ENCODE measurements at regions of chr12 and their contacts with region 1.

Region 1: GRCh38 chr12:107607464-107608392 is 77.9 kb upstream of the PWP1 start:
- DNase-seq: peak; percentile 83 to 86
- ATAC-seq: peak; percentile 78 to 95
- H3K4me3 ChIP-seq: no peak overlapping the region
- H3K27ac ChIP-seq: peak overlapping the region; percentile 6 to 18; a peak in 1 of 6 replicates
- H3K4me1 ChIP-seq: no peaks in the 10 kb centered on the region
- CTCF ChIP-seq: peak; percentile 90
- EP300 ChIP-seq: no peak
- POLR2A ChIP-seq: no peak
- RAD21 ChIP-seq: peak; percentile 95 to 96

Region 2: GRCh38 chr12:107138990-107139389 is 468.7 kb before region 1 on chr12:
- CTCF ChIA-PET with region 1: interaction called, 419 read pairs
- POLR2A ChIA-PET with region 1: no interaction called
- DNase-seq: no peak
- ATAC-seq: no peak
- H3K4me3 ChIP-seq: no peak overlapping the region
- H3K27ac ChIP-seq: no peak overlapping the region
- H3K4me1 ChIP-seq: no peaks in the 10 kb centered on the region
- CTCF ChIP-seq: no peak
- EP300 ChIP-seq: no peak
- POLR2A ChIP-seq: no peak
- RAD21 ChIP-seq: no peak

Region 3: DNA sequence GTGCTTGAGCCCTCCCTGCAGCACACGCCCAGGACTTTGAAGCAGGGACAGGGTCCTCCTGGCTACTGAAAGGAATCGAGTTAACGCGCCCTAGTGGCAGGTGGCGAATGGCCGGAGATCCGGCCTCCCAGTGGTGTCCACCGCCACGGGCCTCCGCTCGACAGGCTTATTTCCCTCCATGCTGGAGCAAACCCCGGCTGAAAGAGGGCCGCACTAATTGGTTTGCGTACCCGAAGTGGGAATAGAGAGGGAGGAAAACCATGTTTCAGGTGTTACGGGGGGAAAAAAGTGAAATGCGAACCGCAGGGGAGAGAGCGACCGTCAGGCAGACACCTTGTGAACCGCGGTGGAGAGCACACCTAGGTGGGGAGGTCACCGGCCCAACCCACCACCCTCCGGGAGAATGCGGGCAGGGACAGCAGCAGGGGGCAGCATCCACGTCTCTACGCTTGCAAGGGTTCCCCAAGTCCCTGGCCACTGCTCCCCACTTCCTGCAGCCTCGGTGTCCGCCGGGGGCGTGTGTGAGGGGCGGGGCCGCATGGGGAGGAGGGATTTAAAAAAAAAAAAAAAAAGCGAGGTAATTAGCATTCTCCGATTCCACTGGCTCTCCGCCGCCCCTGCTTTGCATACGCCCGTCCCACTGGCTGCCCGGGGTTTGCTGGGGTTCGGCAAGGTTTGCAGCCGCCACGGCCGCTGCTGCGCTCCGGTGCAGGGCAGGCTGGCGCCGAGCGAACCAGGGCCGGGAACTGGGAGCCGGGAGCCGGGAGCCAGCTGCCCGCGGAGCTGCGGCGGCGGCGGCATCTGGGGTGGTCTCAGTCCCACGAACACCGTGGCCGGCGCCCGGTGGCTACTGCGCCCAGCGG is 289.7 kb before region 1 on chr12:
- CTCF ChIA-PET with region 1: interaction called, 50 read pairs
- POLR2A ChIA-PET with region 1: no interaction called
- DNase-seq: peak; percentile 91 to 95
- ATAC-seq: peak; percentile 75 to 90
- H3K4me3 ChIP-seq: peak overlapping the region; percentile 88
- H3K27ac ChIP-seq: peak overlapping the region; percentile 85 to 94
- H3K4me1 ChIP-seq: peaks cover 19% of the 10 kb centered on the region; the same call in 2 of the 3 replicates
- CTCF ChIP-seq: peak; percentile 60
- EP300 ChIP-seq: no peak
- POLR2A ChIP-seq: peak; percentile 86
- RAD21 ChIP-seq: peak; percentile 62 to 68

Region 4: DNA sequence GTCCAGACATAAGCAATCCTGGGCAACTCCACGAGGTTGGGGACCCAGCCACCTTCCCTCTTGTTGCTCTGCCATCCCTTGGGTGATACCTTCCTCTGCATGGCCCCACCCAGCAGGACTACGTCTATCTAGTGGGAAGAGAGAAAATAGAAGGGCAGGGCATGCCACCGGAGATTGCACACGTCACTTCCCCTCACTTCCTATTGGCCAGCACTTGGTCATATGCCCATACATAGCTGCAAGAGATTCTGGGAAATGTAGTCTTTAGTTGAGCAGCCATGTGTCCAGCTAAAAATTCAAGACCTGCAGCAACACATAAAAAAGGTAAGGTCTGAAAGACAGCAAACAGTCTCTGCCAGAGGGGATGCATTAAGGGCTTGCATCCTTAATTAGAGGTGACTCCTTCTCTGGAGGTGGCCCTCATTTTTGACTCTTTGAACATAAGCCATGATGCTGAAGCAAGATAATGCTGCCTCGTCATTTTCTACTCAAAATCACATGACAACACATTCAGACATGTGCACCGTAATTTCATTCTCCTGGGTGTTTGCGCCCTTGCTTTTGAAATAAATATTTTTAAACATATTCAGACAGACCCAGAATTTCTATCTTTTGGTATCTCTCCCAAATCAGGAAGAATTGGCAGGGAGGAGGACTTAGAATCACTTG is 13.9 kb before region 1 on chr12:
- CTCF ChIA-PET with region 1: interaction called, 38 read pairs
- POLR2A ChIA-PET with region 1: no interaction called
- DNase-seq: peak in 1 of 2 experiments; percentile 52
- ATAC-seq: no peak
- H3K4me3 ChIP-seq: no peak overlapping the region
- H3K27ac ChIP-seq: no peak overlapping the region
- H3K4me1 ChIP-seq: no peaks in the 10 kb centered on the region; the same call in 2 of the 3 replicates
- CTCF ChIP-seq: no peak
- EP300 ChIP-seq: no peak
- POLR2A ChIP-seq: no peak
- RAD21 ChIP-seq: no peak